ENCODE measurements at regions of chr3 and their contacts with region 1.

Region 1: GRCh38 chr3:107235928-107236315 is 141.3 kb upstream of the CCDC54 start:
- DNase-seq: peak; percentile 65 to 74 (median 68)
- H3K4me3 ChIP-seq: peak overlapping the region in 1 of 2 donors; percentile 32
- H3K4me3 Mint-ChIP-seq: peak overlapping the region; percentile 6 to 73 (median 49)
- H3K27ac ChIP-seq: no peak overlapping the region
- H3K27ac Mint-ChIP-seq: no peak overlapping the region
- H3K4me1 ChIP-seq: peaks cover 7% of the 10 kb centered on the region
- H3K4me1 Mint-ChIP-seq: peaks cover 9 to 13% (median 11%) of the 10 kb centered on the region in 4 donors
- H3K27me3 ChIP-seq: no peaks in the 10 kb centered on the region
- H3K27me3 Mint-ChIP-seq: peaks cover 4 to 5% of the 10 kb centered on the region in 2 donors

Region 2: DNA sequence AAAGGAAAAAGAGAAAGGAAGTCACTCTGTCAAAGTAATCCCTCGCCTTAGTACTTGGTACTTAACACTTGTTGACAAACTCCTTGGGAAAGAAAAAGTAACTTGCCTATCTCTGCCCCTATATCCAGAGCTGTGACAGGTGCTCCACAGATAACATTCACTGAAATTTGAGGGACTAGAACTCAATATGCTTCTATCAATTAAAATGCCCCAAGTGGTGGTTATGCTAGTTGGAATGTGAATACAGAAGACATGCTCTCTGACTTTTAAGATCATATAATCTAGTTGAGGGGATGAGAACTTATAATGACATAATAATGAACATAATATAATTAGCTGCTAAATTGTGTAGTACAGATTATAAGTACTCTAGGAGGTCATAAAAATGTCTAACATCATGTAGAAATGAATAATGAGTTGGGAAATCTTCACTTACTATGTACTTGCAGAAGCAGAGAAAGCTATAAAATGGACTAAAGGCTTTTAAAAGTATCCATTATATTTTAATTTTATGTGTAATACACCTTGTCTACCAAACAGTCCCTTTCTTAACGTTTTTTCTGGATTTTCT is 11.8 kb before region 1 on chr3:
- CTCF ChIA-PET with region 1: interaction called, 14 read pairs
- POLR2A ChIA-PET with region 1: no interaction called
- intact Hi-C with region 1: no loop called
- DNase-seq: no peak
- H3K4me3 ChIP-seq: no peak overlapping the region
- H3K4me3 Mint-ChIP-seq: no peak overlapping the region
- H3K27ac ChIP-seq: no peak overlapping the region
- H3K27ac Mint-ChIP-seq: no peak overlapping the region
- H3K4me1 ChIP-seq: no peaks in the 10 kb centered on the region
- H3K4me1 Mint-ChIP-seq: no peaks in the 10 kb centered on the region
- H3K27me3 ChIP-seq: no peaks in the 10 kb centered on the region
- H3K27me3 Mint-ChIP-seq: peaks cover 6 to 11% of the 10 kb centered on the region in 2 donors

Region 3: DNA sequence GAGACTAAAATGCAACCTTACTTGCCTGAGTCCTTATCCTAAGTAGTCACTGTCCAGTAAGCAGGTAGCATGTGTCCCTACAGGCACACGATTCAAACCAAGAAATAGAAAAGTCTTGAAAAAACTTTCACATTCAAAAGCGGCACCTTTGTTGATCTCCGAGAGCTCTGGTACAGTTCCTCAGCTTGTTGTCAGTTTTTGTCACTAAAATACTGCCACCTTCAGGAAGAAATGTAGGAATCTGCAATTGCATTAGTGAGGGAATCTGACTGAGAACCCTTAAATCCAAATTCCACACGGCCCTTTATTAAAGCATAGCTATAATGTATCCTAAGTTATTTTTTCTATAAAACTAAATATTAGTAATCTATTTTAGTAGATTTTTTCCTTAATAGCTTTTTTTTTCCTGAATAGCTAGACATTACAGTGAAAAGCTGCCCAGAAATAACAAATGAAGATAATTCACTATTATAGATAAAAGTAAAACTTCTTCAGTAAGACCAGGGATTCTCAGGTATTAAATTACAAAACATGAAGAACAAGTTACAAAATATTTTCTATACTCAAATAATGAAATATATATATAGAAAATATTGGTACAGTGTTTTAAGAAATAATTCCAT is 185.4 kb after region 1 on chr3:
- CTCF ChIA-PET with region 1: interaction called, 49 read pairs
- POLR2A ChIA-PET with region 1: no interaction called
- intact Hi-C with region 1: loop called (anchors 1 kb)
- DNase-seq: peak; percentile 38 to 59 (median 47)
- H3K4me3 ChIP-seq: no peak overlapping the region
- H3K4me3 Mint-ChIP-seq: peak overlapping the region in 7 of 8 donors; percentile 17 to 81 (median 60)
- H3K27ac ChIP-seq: no peak overlapping the region
- H3K27ac Mint-ChIP-seq: peak overlapping the region in 2 of 7 donors; percentile 4 to 83
- H3K4me1 ChIP-seq: no peaks in the 10 kb centered on the region
- H3K4me1 Mint-ChIP-seq: peaks cover 0 to 3% (median 3%) of the 10 kb centered on the region in 4 donors
- H3K27me3 ChIP-seq: no peaks in the 10 kb centered on the region
- H3K27me3 Mint-ChIP-seq: peaks cover 1 to 6% of the 10 kb centered on the region in 2 donors

Region 4: DNA sequence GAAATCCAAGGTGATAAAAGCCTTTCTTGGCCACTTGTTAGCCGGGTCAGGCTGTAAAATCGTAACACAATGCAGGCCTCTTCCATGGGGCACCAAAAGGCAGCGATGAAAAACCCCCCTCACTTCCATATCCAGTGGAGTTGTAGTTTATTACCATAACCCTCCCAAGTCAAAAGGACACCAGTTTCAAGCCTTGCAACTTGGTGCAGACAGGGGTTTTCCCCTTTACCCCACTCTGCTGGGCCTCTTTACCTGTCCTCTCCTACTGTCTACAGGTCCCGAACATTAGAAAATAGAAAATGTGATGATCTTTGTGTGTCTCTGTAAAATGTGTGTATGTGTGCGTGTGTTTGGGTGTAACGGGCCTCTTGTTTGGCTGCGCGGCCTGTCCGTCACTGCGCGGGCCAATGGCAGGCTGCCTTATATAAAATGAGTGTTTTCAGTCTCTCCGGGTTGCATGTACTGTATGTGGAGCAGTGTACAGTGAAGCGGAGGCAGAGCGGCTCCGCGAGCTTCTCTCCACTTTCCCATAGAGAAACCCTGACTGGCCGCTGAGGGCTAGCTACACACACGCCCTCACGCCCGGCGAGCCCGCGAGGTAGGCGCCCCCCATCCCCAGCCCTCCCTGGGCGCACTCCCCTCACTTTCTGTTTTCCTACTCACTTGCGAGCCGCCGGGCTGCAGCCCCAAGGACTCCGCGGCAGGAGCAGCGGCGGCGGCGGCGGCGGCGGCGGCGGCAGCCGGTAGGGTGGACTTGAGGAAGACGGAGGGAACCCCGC is 286.8 kb after region 1 on chr3 and contains the start of gene BBX:
- CTCF ChIA-PET with region 1: no interaction called
- POLR2A ChIA-PET with region 1: no interaction called
- intact Hi-C with region 1: loop called (anchors 2 kb)
- DNase-seq: peak; percentile 92 to 98 (median 96)
- H3K4me3 ChIP-seq: peak within 1 kb of the TSS; percentile 70 to 88
- H3K4me3 Mint-ChIP-seq: peak within 1 kb of the TSS; percentile 97 to 99 (median 98)
- H3K27ac ChIP-seq: peak within 1 kb of the TSS; percentile 87
- H3K27ac Mint-ChIP-seq: peak within 1 kb of the TSS; percentile 88 to 98 (median 97)
- H3K4me1 ChIP-seq: peaks cover 29% of the 10 kb centered on the region
- H3K4me1 Mint-ChIP-seq: peaks cover 21 to 29% (median 25%) of the 10 kb centered on the region in 4 donors
- H3K27me3 ChIP-seq: no peaks in the 10 kb centered on the region
- H3K27me3 Mint-ChIP-seq: no peaks in the 10 kb centered on the region
- total RNA-seq, gene BBX: 93.9 to 99.1 TPM

Region 5: DNA sequence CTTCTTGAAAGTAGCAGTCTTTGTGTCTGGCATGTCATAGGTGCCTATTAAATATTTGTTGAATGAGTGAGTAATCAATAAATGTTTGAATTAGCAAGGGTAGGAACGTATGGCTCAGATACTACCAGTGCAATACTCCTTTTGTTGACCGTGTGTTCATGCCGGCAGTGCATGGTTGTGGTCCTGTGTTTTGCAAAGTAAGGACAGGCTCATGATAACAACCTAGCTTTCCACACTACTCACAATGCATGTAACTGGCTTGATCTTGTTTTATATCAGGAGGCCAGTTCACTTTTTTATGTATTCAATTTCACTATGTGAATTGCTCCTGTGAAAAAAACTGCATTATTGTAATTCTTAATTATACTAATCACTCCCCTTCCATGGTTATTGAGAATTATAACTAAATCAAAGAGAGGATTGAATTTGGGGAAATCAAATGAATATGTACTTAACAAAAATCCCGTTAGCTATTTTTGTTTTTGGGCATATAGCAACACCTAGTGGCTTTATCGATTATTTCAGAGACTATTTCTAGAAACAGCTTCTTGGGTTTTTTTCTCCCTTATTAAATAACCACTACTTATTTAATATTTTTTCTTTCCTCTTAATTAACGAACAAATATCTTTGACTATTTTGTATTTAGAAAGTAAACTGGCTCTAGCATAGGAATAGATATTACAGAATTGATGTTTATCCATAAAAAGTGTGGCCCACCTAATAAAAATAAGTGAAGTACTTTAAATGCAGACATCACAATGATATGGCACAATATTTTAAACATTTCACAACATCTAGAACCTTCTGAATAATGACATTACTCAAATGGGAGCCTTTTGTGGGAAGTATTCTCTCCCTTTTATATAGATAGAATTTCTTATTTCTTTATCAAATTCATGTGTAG is 505.3 kb after region 1 on chr3:
- CTCF ChIA-PET with region 1: interaction called, 9 read pairs
- POLR2A ChIA-PET with region 1: no interaction called
- intact Hi-C with region 1: loop called (anchors 1 kb)
- DNase-seq: peak in 4 of 5 donors; percentile 13 to 28 (median 23)
- H3K4me3 ChIP-seq: no peak overlapping the region
- H3K4me3 Mint-ChIP-seq: no peak overlapping the region
- H3K27ac ChIP-seq: no peak overlapping the region
- H3K27ac Mint-ChIP-seq: no peak overlapping the region
- H3K4me1 ChIP-seq: no peaks in the 10 kb centered on the region
- H3K4me1 Mint-ChIP-seq: peaks cover 0 to 7% (median under 1%) of the 10 kb centered on the region in 4 donors
- H3K27me3 ChIP-seq: no peaks in the 10 kb centered on the region
- H3K27me3 Mint-ChIP-seq: no peaks in the 10 kb centered on the region

Region 6: GRCh38 chr3:108552267-108553159 is 1316.6 kb after region 1 on chr3:
- CTCF ChIA-PET with region 1: interaction called, 11 read pairs
- POLR2A ChIA-PET with region 1: no interaction called
- intact Hi-C with region 1: loop called (anchors 1 kb)
- DNase-seq: peak in 4 of 5 donors; percentile 38 to 50 (median 39)
- H3K4me3 ChIP-seq: no peak overlapping the region
- H3K4me3 Mint-ChIP-seq: peak overlapping the region in 1 of 8 donors; percentile 14
- H3K27ac ChIP-seq: no peak overlapping the region
- H3K27ac Mint-ChIP-seq: peak overlapping the region in 2 of 7 donors; percentile 6 to 38
- H3K4me1 ChIP-seq: no peaks in the 10 kb centered on the region
- H3K4me1 Mint-ChIP-seq: peaks cover 4 to 7% (median 7%) of the 10 kb centered on the region in 4 donors
- H3K27me3 ChIP-seq: no peaks in the 10 kb centered on the region
- H3K27me3 Mint-ChIP-seq: no peaks in the 10 kb centered on the region

Measured in CD4-positive, alpha-beta memory T cell (primary cell).